ENCODE measurements at regions of chr2 and their contacts with region 1.

Region 1: GRCh38 chr2:136423516-136423996 is 305.6 kb upstream of the CXCR4 start:
- DNase-seq: peak; percentile 85
- H3K4me3 ChIP-seq: peak overlapping the region; percentile 51 to 64
- H3K27ac ChIP-seq: no peak overlapping the region
- H3K4me1 ChIP-seq: no peaks in the 10 kb centered on the region; a peak in 1 of 4 replicates
- H3K27me3 ChIP-seq: no peaks in the 10 kb centered on the region
- CTCF ChIP-seq: peak; percentile 81
- EP300 ChIP-seq: no peak
- RAD21 ChIP-seq: peak; percentile 86

Region 2: GRCh38 chr2:136135921-136136906 is 287.3 kb before region 1 on chr2:
- CTCF ChIA-PET with region 1: no interaction called
- POLR2A ChIA-PET with region 1: no interaction called
- DNase-seq: no peak
- H3K4me3 ChIP-seq: no peak overlapping the region
- H3K27ac ChIP-seq: no peak overlapping the region
- H3K4me1 ChIP-seq: peaks cover 0 to 3% of the 10 kb centered on the region in 2 experiments; a peak in 2 of 4 replicates
- H3K27me3 ChIP-seq: no peaks in the 10 kb centered on the region
- CTCF ChIP-seq: no peak
- EP300 ChIP-seq: no peak
- RAD21 ChIP-seq: no peak

Region 3: DNA sequence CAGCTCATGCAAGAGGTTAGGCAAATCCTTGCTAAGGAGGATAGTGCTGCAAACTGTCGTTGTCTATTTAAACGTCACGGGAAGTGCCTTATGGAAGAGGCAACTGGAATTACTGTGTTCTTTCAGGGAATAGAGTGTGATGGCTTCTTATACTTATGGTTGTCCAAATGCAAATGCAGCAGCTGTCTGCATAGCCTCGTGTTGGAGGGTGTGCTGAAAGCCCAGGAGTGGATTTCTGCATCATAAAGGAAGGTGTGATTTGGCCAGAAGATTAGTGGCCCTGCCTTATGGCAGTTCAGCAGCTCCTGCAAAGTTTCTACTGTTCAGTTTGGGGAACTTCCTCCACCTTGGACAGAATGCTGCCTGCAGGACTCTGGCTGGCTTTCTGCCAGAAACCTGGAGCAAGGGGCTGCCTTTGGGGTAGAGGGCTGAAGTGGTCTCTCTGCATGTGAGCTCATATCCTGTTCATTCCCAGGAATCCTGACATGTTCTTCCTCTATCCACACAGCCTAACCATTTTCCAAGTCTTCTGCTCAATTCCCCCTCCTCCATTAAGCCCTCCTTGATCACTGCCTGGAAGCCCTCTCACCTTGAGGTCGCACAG is 15.6 kb after region 1 on chr2:
- CTCF ChIA-PET with region 1: interaction called, 17 read pairs
- POLR2A ChIA-PET with region 1: no interaction called
- DNase-seq: no peak
- H3K4me3 ChIP-seq: no peak overlapping the region
- H3K27ac ChIP-seq: no peak overlapping the region
- H3K4me1 ChIP-seq: peaks cover 0 to 6% of the 10 kb centered on the region in 2 experiments; a peak in 2 of 4 replicates
- H3K27me3 ChIP-seq: no peaks in the 10 kb centered on the region
- CTCF ChIP-seq: no peak
- EP300 ChIP-seq: no peak
- RAD21 ChIP-seq: no peak

Region 4: GRCh38 chr2:136738044-136738443 is 314.5 kb after region 1 on chr2:
- CTCF ChIA-PET with region 1: interaction called, 19 read pairs
- POLR2A ChIA-PET with region 1: no interaction called
- DNase-seq: no peak
- H3K4me3 ChIP-seq: no peak overlapping the region
- H3K27ac ChIP-seq: no peak overlapping the region
- H3K4me1 ChIP-seq: no peaks in the 10 kb centered on the region
- H3K27me3 ChIP-seq: no peaks in the 10 kb centered on the region
- CTCF ChIP-seq: no peak
- EP300 ChIP-seq: no peak
- RAD21 ChIP-seq: no peak

Region 5: GRCh38 chr2:136765736-136766323 is 342.3 kb after region 1 on chr2:
- CTCF ChIA-PET with region 1: interaction called, 10 read pairs
- POLR2A ChIA-PET with region 1: no interaction called
- DNase-seq: peak; percentile 72
- H3K4me3 ChIP-seq: peak overlapping the region; percentile 12 to 38; a peak in 2 of 4 replicates
- H3K27ac ChIP-seq: no peak overlapping the region
- H3K4me1 ChIP-seq: peaks cover 0 to 13% of the 10 kb centered on the region in 2 experiments; a peak in 1 of 4 replicates
- H3K27me3 ChIP-seq: no peaks in the 10 kb centered on the region; the same call in 1 of the 2 replicates
- CTCF ChIP-seq: no peak
- EP300 ChIP-seq: no peak
- RAD21 ChIP-seq: no peak

Region 6: GRCh38 chr2:136920652-136921333 is 497.2 kb after region 1 on chr2:
- CTCF ChIA-PET with region 1: interaction called, 44 read pairs
- POLR2A ChIA-PET with region 1: no interaction called
- DNase-seq: peak; percentile 76
- H3K4me3 ChIP-seq: no peak overlapping the region
- H3K27ac ChIP-seq: no peak overlapping the region
- H3K4me1 ChIP-seq: peaks cover 0 to 3% of the 10 kb centered on the region in 2 experiments; a peak in 1 of 4 replicates
- H3K27me3 ChIP-seq: no peaks in the 10 kb centered on the region
- CTCF ChIP-seq: no peak
- EP300 ChIP-seq: no peak
- RAD21 ChIP-seq: peak; percentile 81

Measured in SK-N-SH (cell line).